ENCODE measurements at regions of chr21 and their contacts with region 1.

Region 1: DNA sequence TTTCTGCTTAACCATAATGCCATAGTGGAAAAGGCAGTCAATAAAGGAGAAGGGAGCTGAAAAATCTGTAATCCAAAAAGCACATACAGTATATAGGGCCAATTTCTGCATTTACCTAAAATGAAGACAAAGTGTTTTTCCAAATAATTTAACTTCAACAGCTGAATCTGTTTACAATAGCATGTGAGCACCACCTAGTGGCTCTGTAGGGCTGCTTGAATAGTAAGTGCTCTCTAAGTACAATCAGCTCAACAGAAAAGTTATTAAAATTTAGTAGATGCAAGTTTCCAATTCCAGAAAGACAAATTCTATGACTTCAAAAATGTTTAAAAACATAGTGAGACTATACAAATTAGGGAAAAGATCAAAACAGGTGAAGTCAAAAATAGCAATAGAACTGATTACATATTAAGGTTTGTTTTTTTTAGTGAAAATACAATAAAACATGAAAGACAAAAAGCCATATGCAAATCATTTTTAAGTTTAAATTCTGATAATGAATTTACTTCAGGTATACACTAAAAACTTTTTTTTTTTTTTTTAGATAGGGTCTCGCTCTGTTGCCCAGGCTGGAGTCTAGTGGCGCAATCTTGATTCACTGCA is 220.0 kb downstream of the SETD4 start:
- DNase-seq: peak; percentile 51
- H3K4me3 Mint-ChIP-seq: no peak overlapping the region
- H3K27ac Mint-ChIP-seq: no peak overlapping the region
- H3K4me1 Mint-ChIP-seq: no peaks in the 10 kb centered on the region
- H3K27me3 Mint-ChIP-seq: peaks cover 1% of the 10 kb centered on the region

Region 2: GRCh38 chr21:34722684-34723300 is 1117.5 kb before region 1 on chr21:
- CTCF ChIA-PET with region 1: interaction called, 10 read pairs
- POLR2A ChIA-PET with region 1: no interaction called
- intact Hi-C with region 1: no loop called
- DNase-seq: peak; percentile 37
- H3K4me3 Mint-ChIP-seq: no peak overlapping the region
- H3K27ac Mint-ChIP-seq: no peak overlapping the region
- H3K4me1 Mint-ChIP-seq: no peaks in the 10 kb centered on the region
- H3K27me3 Mint-ChIP-seq: peaks cover 12% of the 10 kb centered on the region

Region 3: DNA sequence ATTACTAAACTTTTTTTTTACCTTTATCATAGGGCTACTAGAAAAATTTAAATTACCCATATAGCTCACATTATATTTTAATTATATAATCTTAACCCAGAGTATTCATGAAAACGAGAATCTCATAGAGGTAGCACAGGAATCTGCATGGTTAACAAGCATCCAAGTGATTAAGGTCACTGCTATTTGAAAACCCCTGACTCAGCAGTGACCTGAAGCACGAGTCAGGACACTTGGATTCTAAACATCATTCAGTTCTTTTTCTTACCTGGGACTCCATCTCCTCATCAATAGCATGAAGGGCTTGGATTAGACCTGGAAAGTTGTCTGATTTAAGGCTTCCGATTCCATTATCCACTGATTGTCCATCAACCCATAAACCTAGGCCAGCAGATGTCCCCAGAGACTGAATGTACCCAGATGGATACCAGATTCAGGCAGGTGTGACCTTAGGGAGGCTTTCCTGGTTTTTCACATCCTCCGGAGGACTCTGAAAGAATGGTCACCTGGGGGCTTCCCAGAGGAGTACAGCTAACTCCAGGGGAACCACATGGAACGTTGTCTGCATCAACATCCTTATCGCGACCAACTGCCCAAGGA is 45.7 kb after region 1 on chr21:
- CTCF ChIA-PET with region 1: no interaction called
- POLR2A ChIA-PET with region 1: no interaction called
- intact Hi-C with region 1: no loop called
- DNase-seq: no peak
- H3K4me3 Mint-ChIP-seq: no peak overlapping the region
- H3K27ac Mint-ChIP-seq: no peak overlapping the region
- H3K4me1 Mint-ChIP-seq: no peaks in the 10 kb centered on the region
- H3K27me3 Mint-ChIP-seq: peaks cover 13% of the 10 kb centered on the region

Region 4: DNA sequence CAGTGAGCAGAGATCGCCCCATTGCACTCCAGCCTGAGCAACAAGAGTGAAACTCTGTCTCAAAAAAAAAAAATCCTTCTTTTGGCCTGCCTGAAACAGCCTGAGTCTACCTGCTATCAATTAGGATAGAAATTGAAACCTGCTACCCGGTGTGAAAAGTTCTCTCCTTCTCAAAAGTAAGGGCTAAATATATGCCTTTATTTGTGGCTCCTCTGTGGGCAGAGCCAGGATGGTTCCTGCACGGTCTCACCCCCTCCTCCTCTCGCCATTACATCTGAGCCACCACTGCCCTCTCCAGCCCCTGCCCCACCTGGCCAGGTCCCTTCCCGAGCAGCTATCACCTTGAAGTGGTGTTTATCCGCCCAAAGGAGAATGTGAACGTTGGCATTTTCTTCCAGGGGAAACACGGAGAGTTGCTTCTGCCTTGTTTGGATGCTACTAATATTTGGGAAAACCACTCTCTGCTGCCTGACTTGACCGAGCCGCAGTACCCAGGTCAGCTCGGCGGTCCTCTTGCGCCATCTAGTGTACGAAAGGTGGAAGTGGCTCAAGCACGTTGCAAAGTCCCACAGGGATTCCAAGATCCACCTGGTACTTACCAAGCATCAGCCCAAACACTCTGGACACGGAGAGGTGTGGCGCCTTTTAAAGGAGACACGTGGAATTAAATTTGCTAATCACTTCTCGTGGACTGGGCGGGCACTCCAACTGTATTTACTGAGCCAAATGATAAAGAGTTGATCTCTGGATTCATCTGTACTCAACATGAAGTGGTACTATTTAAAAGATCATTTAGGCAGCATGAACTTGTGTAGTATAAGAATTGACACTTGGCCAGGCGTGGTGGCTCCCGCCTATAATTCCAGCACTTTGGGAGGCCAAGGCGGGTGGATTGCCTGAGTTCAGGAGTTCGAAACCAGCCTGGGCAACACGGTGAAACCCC is 188.1 kb after region 1 on chr21:
- CTCF ChIA-PET with region 1: interaction called, 10 read pairs
- POLR2A ChIA-PET with region 1: no interaction called
- intact Hi-C with region 1: loop called (anchors 2 kb)
- DNase-seq: peak; percentile 77
- H3K4me3 Mint-ChIP-seq: no peak overlapping the region
- H3K27ac Mint-ChIP-seq: no peak overlapping the region
- H3K4me1 Mint-ChIP-seq: peaks cover 4% of the 10 kb centered on the region
- H3K27me3 Mint-ChIP-seq: no peaks in the 10 kb centered on the region

Region 5: GRCh38 chr21:36319765-36320420 is 479.6 kb after region 1 on chr21 and contains the start of gene MORC3:
- CTCF ChIA-PET with region 1: no interaction called
- POLR2A ChIA-PET with region 1: no interaction called
- intact Hi-C with region 1: no loop called
- DNase-seq: peak; percentile 99
- H3K4me3 Mint-ChIP-seq: peak within 1 kb of the TSS; percentile 90
- H3K27ac Mint-ChIP-seq: peak within 1 kb of the TSS; percentile 97
- H3K4me1 Mint-ChIP-seq: peaks cover 30% of the 10 kb centered on the region
- H3K27me3 Mint-ChIP-seq: no peaks in the 10 kb centered on the region
- total RNA-seq, gene MORC3: 27.7 to 30.0 TPM